Activated CD8-positive, alpha-beta T cell treated with anti-CD3 and anti-CD28 coated beads for 36 hours (primary cell): ENCODE measurements at regions of chrX and their contacts with region 1.

Region 1: GRCh38 chrX:46398126-46398525 is 147.1 kb downstream of the ZNF674 start:
- DNase-seq: no peak
- ATAC-seq: no peak
- H3K4me3 Mint-ChIP-seq: no peak overlapping the region
- H3K27ac Mint-ChIP-seq: no peak overlapping the region
- H3K4me1 Mint-ChIP-seq: no peaks in the 10 kb centered on the region
- H3K27me3 Mint-ChIP-seq: no peaks in the 10 kb centered on the region
- CTCF ChIP-seq: no peak

Region 2: GRCh38 chrX:46059316-46059715 is 338.8 kb before region 1 on chrX:
- CTCF ChIA-PET with region 1: no interaction called
- POLR2A ChIA-PET with region 1: no interaction called
- intact Hi-C with region 1: no loop called
- DNase-seq: no peak
- ATAC-seq: no peak
- H3K4me3 Mint-ChIP-seq: no peak overlapping the region
- H3K27ac Mint-ChIP-seq: no peak overlapping the region
- H3K4me1 Mint-ChIP-seq: no peaks in the 10 kb centered on the region
- H3K27me3 Mint-ChIP-seq: no peaks in the 10 kb centered on the region
- CTCF ChIP-seq: no peak

Region 3: DNA sequence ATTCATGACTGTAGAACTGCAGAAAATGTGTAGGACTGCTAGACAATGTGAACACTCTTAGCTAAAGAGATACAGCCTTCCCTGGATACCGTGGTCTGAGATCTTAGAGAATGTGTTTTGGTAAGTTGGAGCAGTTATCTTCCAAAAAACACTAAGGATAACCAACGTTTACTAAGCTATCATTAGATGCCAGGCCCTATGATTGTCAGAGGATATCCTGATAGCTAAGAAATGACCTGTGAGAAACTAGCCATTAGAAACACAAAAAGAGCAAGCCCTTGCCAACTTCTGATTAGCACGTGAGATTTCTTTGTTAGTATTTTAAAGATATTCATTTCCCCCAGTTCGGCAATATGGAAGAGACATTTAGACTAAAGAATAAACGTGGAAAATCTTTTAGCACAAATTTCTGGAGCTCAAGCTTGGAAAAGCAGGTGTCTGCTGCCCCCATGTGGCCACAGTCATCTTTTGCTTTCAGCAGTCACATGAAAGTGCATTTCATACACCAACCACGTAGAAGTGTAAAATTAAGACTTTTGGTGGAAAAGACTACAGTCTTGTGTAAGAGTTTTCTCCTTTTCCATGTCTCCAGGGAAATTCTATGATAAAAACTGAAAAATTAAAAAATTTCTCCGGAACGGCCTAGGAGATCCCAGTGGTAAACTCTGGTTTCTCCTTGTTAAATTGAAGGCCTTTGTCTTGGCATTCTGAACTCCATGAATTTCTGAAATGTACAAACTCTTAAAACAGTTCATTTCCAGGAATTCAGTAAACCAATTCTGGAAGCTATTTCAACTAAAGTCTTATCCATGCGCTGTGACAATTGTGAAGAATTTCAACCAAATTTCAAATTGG is 10.7 kb after region 1 on chrX:
- CTCF ChIA-PET with region 1: interaction called, 10 read pairs
- POLR2A ChIA-PET with region 1: no interaction called
- intact Hi-C with region 1: no loop called
- DNase-seq: peak; percentile 78
- ATAC-seq: no peak
- H3K4me3 Mint-ChIP-seq: no peak overlapping the region
- H3K27ac Mint-ChIP-seq: no peak overlapping the region
- H3K4me1 Mint-ChIP-seq: no peaks in the 10 kb centered on the region
- H3K27me3 Mint-ChIP-seq: no peaks in the 10 kb centered on the region
- CTCF ChIP-seq: peak; percentile 85